ENCODE measurements at regions of chr5 and their contacts with region 1.

Region 1: GRCh38 chr5:53478411-53479044 is 1.9 kb upstream of the FST start:
- DNase-seq: peak; percentile 22
- H3K4me3 ChIP-seq: peak overlapping the region; percentile 83
- H3K27ac ChIP-seq: peak overlapping the region; percentile 11
- H3K4me1 ChIP-seq: peaks cover 40% of the 10 kb centered on the region
- H3K27me3 ChIP-seq: peaks cover 20% of the 10 kb centered on the region
- CTCF ChIP-seq: peak; percentile 68

Region 2: GRCh38 chr5:53291047-53291927 is 187.2 kb before region 1 on chr5:
- intact Hi-C with region 1: no loop called
- DNase-seq: no peak
- H3K4me3 ChIP-seq: no peak overlapping the region
- H3K27ac ChIP-seq: peak overlapping the region; percentile 55
- H3K4me1 ChIP-seq: no peaks in the 10 kb centered on the region
- H3K27me3 ChIP-seq: no peaks in the 10 kb centered on the region
- CTCF ChIP-seq: no peak

Region 3: GRCh38 chr5:53438486-53439472 is 39.7 kb before region 1 on chr5:
- intact Hi-C with region 1: no loop called
- DNase-seq: no peak
- H3K4me3 ChIP-seq: no peak overlapping the region
- H3K27ac ChIP-seq: no peak overlapping the region
- H3K4me1 ChIP-seq: no peaks in the 10 kb centered on the region
- H3K27me3 ChIP-seq: peaks cover under 1% of the 10 kb centered on the region
- CTCF ChIP-seq: no peak

Region 4: GRCh38 chr5:53874409-53874808 is 395.9 kb after region 1 on chr5:
- intact Hi-C with region 1: loop called (anchors 10 kb)
- DNase-seq: no peak
- H3K4me3 ChIP-seq: no peak overlapping the region
- H3K27ac ChIP-seq: no peak overlapping the region
- H3K4me1 ChIP-seq: no peaks in the 10 kb centered on the region
- H3K27me3 ChIP-seq: no peaks in the 10 kb centered on the region
- CTCF ChIP-seq: no peak

Region 5: GRCh38 chr5:54217826-54218503 is 739.4 kb after region 1 on chr5:
- intact Hi-C with region 1: loop called (anchors 5 kb)
- DNase-seq: no peak
- H3K4me3 ChIP-seq: no peak overlapping the region
- H3K27ac ChIP-seq: no peak overlapping the region
- H3K4me1 ChIP-seq: peaks cover 25% of the 10 kb centered on the region
- H3K27me3 ChIP-seq: no peaks in the 10 kb centered on the region
- CTCF ChIP-seq: peak; percentile 89

Measured in left ventricle myocardium inferior (tissue), 1 donor.